Right ventricle myocardium inferior (tissue), 1 donor: ENCODE measurements at regions of chr7 and their contacts with region 1.

Region 1: GRCh38 chr7:2844165-2844898 is at the start of gene GNA12:
- DNase-seq: peak; percentile 98
- ATAC-seq: peak; percentile 97
- total RNA-seq, gene GNA12: 40.8 TPM

Region 2: DNA sequence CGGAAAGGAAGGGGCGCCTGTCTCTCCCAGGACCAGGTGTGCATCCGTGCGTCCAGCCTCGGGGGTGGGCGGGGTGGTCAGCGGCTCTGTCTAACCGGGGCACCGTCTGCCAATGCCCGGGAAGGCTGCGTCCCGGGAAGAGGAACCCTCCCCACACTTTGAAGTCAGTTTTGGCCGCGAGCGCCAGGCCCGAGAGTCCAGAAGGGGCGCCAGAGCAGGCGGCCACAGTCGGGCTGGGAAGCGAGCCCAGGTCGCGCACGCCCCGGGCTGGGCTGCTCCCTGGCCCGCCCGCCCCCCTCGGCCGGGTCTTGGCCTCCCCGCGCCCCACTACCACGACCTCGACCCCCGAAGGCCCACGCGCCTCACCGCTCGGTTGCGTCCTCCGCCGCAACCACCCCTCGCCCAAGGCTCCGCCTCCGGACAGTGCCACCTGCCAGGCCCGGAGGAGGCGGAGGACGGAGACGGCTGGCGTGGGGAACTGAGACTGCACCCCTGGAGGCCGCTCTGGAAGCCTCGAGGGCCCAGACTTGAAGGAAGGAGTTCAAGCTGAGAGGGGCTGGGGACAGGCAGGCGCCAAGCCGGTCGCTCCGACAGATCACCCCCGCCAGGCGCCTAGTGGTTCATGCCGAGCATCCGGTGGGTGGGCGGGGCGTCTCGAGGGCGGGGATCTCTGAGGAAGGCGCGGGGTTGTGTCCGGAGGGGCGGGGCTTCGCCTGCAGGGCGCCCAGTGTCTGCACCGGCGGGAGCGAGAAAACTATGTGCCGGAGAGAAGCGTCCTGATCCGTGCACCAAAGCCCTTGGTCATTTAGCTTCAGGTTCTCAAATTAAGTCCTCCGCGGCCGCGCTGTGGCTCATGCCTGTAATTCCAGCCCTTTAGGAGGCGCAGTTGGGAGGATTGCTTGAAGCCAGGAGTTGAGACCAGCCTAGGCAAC is 288.9 kb before region 1 on chr7 and contains the start of gene BRAT1:
- intact Hi-C with region 1: loop called (anchors 5 kb)
- DNase-seq: peak; percentile 99
- ATAC-seq: peak; percentile 94
- total RNA-seq, gene BRAT1: 14.8 TPM

Region 3: GRCh38 chr7:2732959-2733584 is 111.3 kb before region 1 on chr7:
- intact Hi-C with region 1: loop called (anchors 5 kb)
- DNase-seq: no peak
- ATAC-seq: peak; percentile 75

Region 4: DNA sequence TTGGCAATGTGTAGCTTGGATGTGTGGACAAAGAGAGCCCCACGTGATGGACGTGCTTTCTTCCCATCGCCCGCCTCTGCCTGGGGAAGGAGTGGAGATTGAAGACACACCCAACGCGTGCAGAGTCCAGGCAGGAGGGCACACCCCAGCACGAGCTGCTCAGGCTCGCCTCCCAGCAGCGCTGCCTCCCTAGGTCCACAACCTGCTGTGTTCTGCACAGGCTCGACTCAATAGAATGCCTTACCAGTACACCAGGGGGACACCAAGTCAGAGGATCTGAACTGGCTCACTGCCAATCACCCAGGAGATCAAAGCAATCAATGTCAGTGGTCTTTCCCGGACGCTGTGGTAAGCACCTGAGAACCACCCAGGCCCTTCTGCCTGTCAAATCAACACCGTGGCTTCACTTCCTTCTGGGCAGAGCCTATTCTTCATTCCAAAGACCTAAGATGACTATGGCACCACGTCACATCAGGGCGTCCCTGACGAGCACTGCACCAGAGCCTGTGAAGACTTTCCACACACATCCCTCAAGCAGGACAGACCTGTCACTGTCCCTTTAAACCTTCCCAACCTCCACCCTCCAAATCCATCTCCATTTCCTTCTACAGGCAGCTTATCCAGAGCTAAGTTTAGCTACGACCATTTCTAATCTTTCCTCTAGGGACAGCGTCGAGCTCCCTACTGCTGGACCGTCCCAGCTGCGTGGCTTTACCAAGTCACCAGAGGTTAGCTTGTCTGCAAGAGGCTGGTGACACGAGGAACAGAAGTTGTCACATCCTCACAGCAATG is 84.0 kb before region 1 on chr7:
- intact Hi-C with region 1: loop called (anchors 5 kb)
- DNase-seq: peak; percentile 74
- ATAC-seq: peak; percentile 76

Region 5: GRCh38 chr7:2800931-2801688 is 43.2 kb before region 1 on chr7:
- intact Hi-C with region 1: loop called (anchors 5 kb)
- DNase-seq: no peak
- ATAC-seq: peak; percentile 15